B cell (primary cell): ENCODE measurements at regions of chr5 and their contacts with region 1.

Region 1: DNA sequence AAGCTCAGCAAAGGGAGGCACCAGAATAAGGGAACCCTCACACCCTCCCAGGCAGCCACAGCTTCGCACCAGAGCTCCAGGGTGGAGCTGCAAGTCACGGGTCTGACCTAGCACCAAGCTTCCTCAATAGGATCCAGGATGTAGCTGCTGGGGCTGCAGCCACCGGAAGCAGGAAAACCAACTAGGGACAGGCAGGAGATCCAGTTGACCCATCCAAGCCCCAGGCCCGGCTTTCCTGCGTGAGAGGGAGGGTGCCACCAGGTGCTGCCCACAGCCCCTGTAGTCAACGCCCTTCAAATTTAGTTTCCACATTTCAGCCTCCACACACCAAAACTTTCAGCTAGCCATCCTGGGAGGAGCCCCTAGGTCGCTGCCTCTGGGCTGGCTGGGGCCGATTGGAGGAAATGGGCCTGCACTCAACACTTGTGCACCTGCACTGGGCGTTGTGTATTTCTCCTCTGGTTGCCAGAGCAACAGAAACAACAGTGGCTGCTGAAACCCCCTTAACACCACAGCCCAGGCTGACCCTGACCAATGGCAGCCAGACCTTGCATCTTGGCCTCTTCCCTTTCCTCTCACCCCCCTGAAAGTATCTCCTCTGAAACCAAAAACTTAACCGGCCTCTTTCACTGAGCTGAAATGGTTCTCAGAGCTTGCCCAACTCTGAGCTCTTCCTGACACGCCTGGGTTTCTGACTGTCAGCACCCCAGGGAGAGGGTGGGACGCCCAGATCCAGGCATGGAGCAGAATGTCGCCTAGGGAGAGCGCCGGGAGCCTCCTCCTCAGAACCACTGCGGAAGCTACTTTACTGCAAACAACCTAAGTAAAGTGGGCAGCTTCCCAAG is 226.5 kb upstream of the MAP3K1 start:
- DNase-seq: peak; percentile 98
- ATAC-seq: peak; percentile 85
- H3K4me3 ChIP-seq: peak overlapping the region in 3 of 5 experiments; percentile 22 to 41 (median 25)
- H3K4me3 Mint-ChIP-seq: peak overlapping the region; percentile 59
- H3K27ac ChIP-seq: peak overlapping the region; percentile 99 to 100
- H3K27ac Mint-ChIP-seq: peak overlapping the region; percentile 96
- H3K4me1 ChIP-seq: peaks cover 63 to 67% of the 10 kb centered on the region in 2 donors
- H3K4me1 Mint-ChIP-seq: peaks cover 77% of the 10 kb centered on the region
- H3K27me3 ChIP-seq: no peaks in the 10 kb centered on the region
- H3K27me3 Mint-ChIP-seq: no peaks in the 10 kb centered on the region
- CTCF ChIP-seq: no peak

Region 2: GRCh38 chr5:55994574-55995333 is 594.1 kb before region 1 on chr5 and contains the start of gene IL6ST:
- CTCF ChIA-PET with region 1: no interaction called
- POLR2A ChIA-PET with region 1: no interaction called
- intact Hi-C with region 1: loop called (anchors 10 kb)
- DNase-seq: peak; percentile 96
- ATAC-seq: peak; percentile 94
- H3K4me3 ChIP-seq: peak within 1 kb of the TSS; percentile 75 to 97 (median 91)
- H3K4me3 Mint-ChIP-seq: peak within 1 kb of the TSS; percentile 89
- H3K27ac ChIP-seq: peak within 1 kb of the TSS; percentile 75 to 94
- H3K27ac Mint-ChIP-seq: peak within 1 kb of the TSS; percentile 78
- H3K4me1 ChIP-seq: peaks cover 11 to 18% of the 10 kb centered on the region in 2 donors
- H3K4me1 Mint-ChIP-seq: peaks cover 33% of the 10 kb centered on the region
- H3K27me3 ChIP-seq: no peaks in the 10 kb centered on the region
- H3K27me3 Mint-ChIP-seq: peaks cover 4% of the 10 kb centered on the region
- CTCF ChIP-seq: no peak
- total RNA-seq, gene IL6ST: 28.0 and 31.1 TPM in 2 replicates

Region 3: GRCh38 chr5:56112526-56113121 is 476.2 kb before region 1 on chr5:
- CTCF ChIA-PET with region 1: no interaction called
- POLR2A ChIA-PET with region 1: no interaction called
- intact Hi-C with region 1: no loop called
- DNase-seq: no peak
- ATAC-seq: no peak
- H3K4me3 ChIP-seq: no peak overlapping the region
- H3K4me3 Mint-ChIP-seq: no peak overlapping the region
- H3K27ac ChIP-seq: no peak overlapping the region
- H3K27ac Mint-ChIP-seq: no peak overlapping the region
- H3K4me1 ChIP-seq: no peaks in the 10 kb centered on the region
- H3K4me1 Mint-ChIP-seq: no peaks in the 10 kb centered on the region
- H3K27me3 ChIP-seq: no peaks in the 10 kb centered on the region
- H3K27me3 Mint-ChIP-seq: peaks cover under 1% of the 10 kb centered on the region
- CTCF ChIP-seq: no peak

Region 4: GRCh38 chr5:56565644-56566043 is 23.2 kb before region 1 on chr5:
- CTCF ChIA-PET with region 1: interaction called, 7 read pairs
- POLR2A ChIA-PET with region 1: interaction called, 13 read pairs
- intact Hi-C with region 1: loop called (anchors 1 kb)
- DNase-seq: peak; percentile 82
- ATAC-seq: peak; percentile 97
- H3K4me3 ChIP-seq: peak overlapping the region in 3 of 5 experiments; percentile 6 to 20 (median 9)
- H3K4me3 Mint-ChIP-seq: peak overlapping the region; percentile 56
- H3K27ac ChIP-seq: no peak overlapping the region
- H3K27ac Mint-ChIP-seq: peak overlapping the region; percentile 69
- H3K4me1 ChIP-seq: peaks cover 34 to 35% of the 10 kb centered on the region in 2 donors
- H3K4me1 Mint-ChIP-seq: peaks cover 41% of the 10 kb centered on the region
- H3K27me3 ChIP-seq: no peaks in the 10 kb centered on the region
- H3K27me3 Mint-ChIP-seq: no peaks in the 10 kb centered on the region
- CTCF ChIP-seq: no peak

Region 5: DNA sequence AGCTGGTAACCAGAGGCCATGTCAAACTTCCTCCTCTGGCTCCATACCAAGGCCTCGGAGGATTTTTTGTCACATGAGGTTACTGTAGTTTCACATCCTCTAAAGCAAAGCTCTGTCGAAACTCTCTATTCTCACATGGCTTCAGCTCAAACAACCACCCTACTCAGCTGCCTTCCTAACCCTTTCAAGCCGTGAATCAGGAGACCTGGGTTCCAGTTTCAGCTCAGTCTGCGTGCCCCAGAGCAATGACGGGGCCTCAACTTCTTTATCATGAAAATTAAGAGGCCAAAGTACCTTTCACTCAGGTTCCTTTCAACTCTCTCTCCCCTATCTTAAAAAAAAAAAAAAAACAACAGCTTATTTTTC is 81.2 kb after region 1 on chr5:
- CTCF ChIA-PET with region 1: interaction called, 12 read pairs
- POLR2A ChIA-PET with region 1: interaction called, 22 read pairs
- intact Hi-C with region 1: loop called (anchors 1 kb)
- DNase-seq: peak; percentile 95
- ATAC-seq: no peak
- H3K4me3 ChIP-seq: no peak overlapping the region
- H3K4me3 Mint-ChIP-seq: peak overlapping the region; percentile 75
- H3K27ac ChIP-seq: peak overlapping the region; percentile 97 to 98
- H3K27ac Mint-ChIP-seq: peak overlapping the region; percentile 97
- H3K4me1 ChIP-seq: peaks cover 58% of the 10 kb centered on the region in 2 donors
- H3K4me1 Mint-ChIP-seq: peaks cover 74% of the 10 kb centered on the region
- H3K27me3 ChIP-seq: no peaks in the 10 kb centered on the region
- H3K27me3 Mint-ChIP-seq: no peaks in the 10 kb centered on the region
- CTCF ChIP-seq: no peak

Region 6: DNA sequence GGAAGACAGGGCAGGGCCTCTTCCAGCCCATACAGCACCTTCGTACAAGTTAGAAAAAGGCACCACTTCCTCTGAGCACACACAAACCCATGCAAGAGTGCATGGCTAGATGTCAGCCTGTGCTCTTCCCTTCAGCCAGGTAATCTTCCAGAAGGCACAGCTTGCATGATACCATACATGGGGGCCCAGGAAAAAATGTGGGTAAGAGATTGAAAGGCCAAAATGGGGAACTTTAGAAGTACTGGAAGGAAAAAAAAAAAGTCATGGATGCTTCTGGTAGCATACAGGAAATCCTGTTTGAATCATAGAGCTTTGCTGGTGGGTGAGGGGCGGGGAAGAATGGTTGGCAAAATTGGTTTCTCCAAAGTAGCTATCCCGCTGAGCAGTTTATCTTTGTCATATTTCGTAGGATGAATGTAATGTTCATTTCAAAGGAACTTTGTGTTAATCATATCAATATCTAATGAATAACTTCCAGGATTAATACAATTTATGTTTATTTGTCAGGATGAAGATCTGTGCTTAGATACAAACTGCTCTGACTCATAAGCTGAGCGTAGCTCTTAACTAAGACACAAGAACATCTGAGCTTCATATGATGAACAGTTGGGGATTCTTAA is 148.3 kb after region 1 on chr5:
- CTCF ChIA-PET with region 1: no interaction called
- POLR2A ChIA-PET with region 1: no interaction called
- intact Hi-C with region 1: loop called (anchors 2 kb)
- DNase-seq: peak; percentile 34
- ATAC-seq: peak; percentile 18
- H3K4me3 ChIP-seq: peak overlapping the region in 1 of 5 experiments; percentile 48
- H3K4me3 Mint-ChIP-seq: peak overlapping the region; percentile 73
- H3K27ac ChIP-seq: peak overlapping the region; percentile 79 to 91
- H3K27ac Mint-ChIP-seq: peak overlapping the region; percentile 87
- H3K4me1 ChIP-seq: peaks cover 63% of the 10 kb centered on the region in 2 donors
- H3K4me1 Mint-ChIP-seq: peaks cover 63% of the 10 kb centered on the region
- H3K27me3 ChIP-seq: no peaks in the 10 kb centered on the region
- H3K27me3 Mint-ChIP-seq: no peaks in the 10 kb centered on the region
- CTCF ChIP-seq: no peak